Heart right ventricle (tissue), 16 donors: ENCODE measurements at regions of chr2 and their contacts with region 1.

Region 1: DNA sequence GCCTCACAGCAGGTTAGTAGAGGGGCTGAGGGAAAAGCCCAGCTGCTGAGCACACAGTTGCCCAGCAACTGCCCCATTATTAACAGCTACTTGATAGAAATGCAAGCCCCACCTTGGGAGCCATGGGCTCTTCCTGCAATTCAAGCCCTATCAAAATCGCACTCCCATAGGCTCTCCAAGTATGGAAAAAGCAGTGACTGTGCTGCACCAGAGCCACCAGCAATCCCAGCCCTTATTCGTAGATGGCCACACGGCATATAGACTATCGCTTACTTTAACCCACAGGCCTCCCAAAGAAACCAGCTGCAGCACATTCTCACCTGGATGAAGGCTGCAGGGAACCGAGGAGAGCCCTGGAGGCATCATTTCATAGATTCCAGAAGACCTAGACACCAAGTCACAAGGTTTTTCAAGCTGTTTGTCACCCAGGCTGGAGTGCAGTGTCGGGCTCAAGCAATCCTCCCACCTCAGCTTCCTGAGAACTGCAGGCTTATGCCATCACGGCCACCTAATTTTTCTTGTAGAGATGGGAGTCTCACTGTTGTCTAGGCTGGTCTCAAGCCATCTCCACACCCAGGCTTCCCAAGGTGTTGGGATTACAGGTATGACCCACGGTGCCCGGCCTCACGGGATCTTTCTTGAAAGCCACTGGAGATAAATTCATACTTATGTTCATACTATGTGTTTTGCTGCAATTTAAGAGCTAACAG is 11.3 kb downstream of the NCL start:
- DNase-seq: no peak
- ATAC-seq: peak in 3 of 8 donors; percentile 9 to 14 (median 11)
- H3K4me3 ChIP-seq: no peak overlapping the region
- H3K27ac ChIP-seq: no peak overlapping the region
- H3K4me1 ChIP-seq: peaks cover 0 to 3% (median 0%) of the 10 kb centered on the region in 9 donors
- H3K27me3 ChIP-seq: no peaks in the 10 kb centered on the region
- CTCF ChIP-seq: no peak

Region 2: DNA sequence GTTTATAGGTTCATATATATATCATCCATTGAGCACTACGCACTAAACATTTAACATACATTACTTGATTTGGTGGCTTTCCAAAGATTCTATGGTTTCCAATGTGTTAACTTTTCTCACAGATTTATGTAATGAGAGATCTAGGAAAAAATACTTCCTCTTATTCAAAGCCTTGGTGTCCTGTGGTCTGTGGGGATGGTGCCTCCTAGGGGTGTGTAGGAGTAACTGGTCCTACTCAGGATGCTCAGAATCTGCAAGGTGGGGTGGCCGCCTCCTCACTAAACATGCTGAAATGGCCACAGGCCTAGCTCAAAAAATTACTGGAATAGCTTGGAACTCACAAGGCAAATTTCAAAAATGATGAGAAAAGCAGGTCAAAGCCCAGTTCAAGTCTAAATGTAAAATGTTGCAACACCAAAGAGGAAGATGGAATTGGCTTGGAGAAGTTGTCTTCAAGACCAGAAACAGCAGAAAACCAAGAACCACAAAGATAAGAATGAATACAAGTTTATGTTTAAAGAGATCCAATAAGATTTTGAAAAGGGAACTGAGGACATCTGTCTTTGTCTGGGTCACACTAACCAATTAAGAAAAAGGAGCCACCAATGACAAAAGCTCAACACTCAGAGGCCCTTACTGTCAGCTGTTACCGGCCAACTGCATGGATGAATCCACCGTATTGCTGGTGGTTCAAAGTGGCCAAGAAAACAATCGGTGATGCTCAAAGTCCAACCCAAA is 539.4 kb before region 1 on chr2:
- intact Hi-C with region 1: no loop called
- DNase-seq: no peak
- ATAC-seq: peak in 2 of 8 donors; percentile 28 to 51
- H3K4me3 ChIP-seq: no peak overlapping the region
- H3K27ac ChIP-seq: peak overlapping the region in 2 of 10 donors; percentile 4 to 50
- H3K4me1 ChIP-seq: peaks cover 0 to 21% (median 7%) of the 10 kb centered on the region in 9 donors
- H3K27me3 ChIP-seq: peaks cover 0 to 32% (median 11%) of the 10 kb centered on the region in 7 donors
- CTCF ChIP-seq: peak in 8 of 9 donors; percentile 16 to 66 (median 39)

Region 3: GRCh38 chr2:231110551-231110950 is 342.4 kb before region 1 on chr2:
- intact Hi-C with region 1: loop called in 6 of 10 experiments (anchors 2 to 10 kb)
- DNase-seq: no peak
- ATAC-seq: peak in 7 of 8 donors; percentile 58 to 87 (median 75)
- H3K4me3 ChIP-seq: no peak overlapping the region
- H3K27ac ChIP-seq: peak overlapping the region in 1 of 10 donors; percentile 43
- H3K4me1 ChIP-seq: peaks cover 0 to 34% (median 12%) of the 10 kb centered on the region in 9 donors
- H3K27me3 ChIP-seq: no peaks in the 10 kb centered on the region
- CTCF ChIP-seq: peak in 7 of 9 donors; percentile 16 to 63 (median 40)

Region 4: GRCh38 chr2:231227309-231228162 is 225.4 kb before region 1 on chr2:
- intact Hi-C with region 1: loop called in 7 of 10 experiments (anchors 1 to 10 kb)
- DNase-seq: peak in 1 of 2 donors; percentile 68
- ATAC-seq: peak; percentile 89 to 96 (median 94)
- H3K4me3 ChIP-seq: no peak overlapping the region
- H3K27ac ChIP-seq: peak overlapping the region in 2 of 10 donors; percentile 10 to 42
- H3K4me1 ChIP-seq: peaks cover 0 to 7% (median 0%) of the 10 kb centered on the region in 9 donors
- H3K27me3 ChIP-seq: no peaks in the 10 kb centered on the region
- CTCF ChIP-seq: peak; percentile 55 to 85 (median 80)

Region 5: DNA sequence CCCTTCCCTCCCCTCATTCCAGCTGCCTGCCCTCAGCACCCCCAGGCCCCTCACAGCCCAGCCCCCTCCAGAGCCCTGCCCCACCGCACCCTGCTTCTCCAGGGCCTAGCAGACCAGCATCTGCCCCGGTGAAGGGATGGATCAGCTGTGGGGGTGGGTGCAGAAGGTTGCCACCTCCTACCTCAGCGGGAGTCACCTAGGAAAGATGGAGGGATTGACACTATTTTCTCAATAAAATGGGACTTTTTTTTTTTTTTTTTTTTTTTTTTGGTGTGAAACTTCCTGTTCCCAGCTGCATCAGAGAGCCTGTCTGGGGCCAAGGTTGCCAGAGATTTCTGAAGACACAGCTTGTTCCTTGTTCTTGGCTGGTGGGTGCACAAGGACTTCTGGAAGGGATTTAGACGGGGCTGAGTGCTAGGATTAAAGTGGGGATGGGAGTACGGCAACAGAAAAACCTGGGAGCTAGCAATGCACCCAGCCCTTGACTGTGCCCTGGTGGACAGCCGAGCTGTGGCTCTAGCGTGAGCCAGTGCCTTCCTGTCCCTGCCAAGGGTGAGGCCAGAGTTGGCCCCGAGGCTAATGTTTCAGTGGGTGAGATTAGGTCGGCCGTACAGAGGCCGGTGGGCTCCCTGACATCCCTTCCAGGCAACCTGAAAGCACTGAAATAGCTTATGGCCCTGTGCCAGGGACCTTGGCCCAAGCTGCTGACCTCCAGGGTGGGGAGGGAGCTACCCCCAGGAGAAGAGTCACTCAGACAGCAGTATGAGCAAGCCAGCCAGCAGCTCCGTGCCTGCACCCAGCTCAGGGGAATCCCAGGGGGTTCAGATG is 52.9 kb before region 1 on chr2:
- intact Hi-C with region 1: no loop called
- DNase-seq: peak; percentile 53 to 60
- ATAC-seq: peak; percentile 77 to 94 (median 88)
- H3K4me3 ChIP-seq: peak overlapping the region in 1 of 10 donors; percentile 5
- H3K27ac ChIP-seq: peak overlapping the region in 9 of 10 donors; percentile 28 to 76 (median 59)
- H3K4me1 ChIP-seq: peaks cover 0 to 31% (median 22%) of the 10 kb centered on the region in 9 donors
- H3K27me3 ChIP-seq: peaks cover 0 to 16% (median 10%) of the 10 kb centered on the region in 7 donors
- CTCF ChIP-seq: peak in 4 of 9 donors; percentile 34 to 47 (median 41)